ENCODE measurements at regions of chr14 and their contacts with region 1.

Region 1: DNA sequence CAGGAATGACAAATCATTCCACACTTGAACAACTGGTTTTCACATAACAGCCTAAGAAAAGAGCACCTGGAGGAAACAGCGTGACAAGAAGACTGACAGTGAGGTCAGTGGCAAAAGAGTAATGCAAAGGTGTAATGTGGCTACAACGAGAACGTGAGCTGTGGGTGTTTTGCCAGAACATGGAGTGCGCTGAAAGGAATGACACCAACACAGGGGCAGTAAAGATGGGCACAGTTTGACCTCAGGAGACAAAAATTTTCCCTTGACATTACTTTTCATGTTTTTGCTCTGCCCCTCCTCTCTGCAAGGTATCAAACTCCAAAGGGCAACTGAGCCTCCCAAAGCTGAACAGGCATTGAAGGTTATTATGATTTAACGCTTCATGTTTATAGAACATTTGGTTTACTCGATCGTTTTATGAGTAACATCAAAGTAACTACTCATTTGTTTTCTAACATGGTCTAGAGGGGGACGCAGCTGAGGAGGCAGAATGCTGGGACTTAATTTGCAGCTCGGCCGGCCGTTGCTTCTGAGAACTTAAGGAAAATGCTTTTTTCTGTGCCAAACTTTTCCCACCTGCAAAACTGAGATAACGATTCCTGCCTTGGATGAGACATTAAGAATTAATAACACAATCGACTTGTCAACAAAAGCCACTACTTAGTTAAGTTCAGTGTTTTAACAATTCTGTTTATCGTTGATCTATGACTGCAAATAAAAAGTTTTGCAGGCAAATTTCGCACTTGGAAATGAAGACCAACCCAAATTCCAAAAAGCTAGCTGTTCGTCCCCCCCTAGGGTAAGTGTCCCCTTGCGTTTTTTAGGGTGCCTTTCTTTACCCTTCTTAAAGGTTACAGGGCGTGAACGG is 954 bp downstream of the HAUS4 start:
- DNase-seq: peak; percentile 55
- H3K4me3 ChIP-seq: peak overlapping the region; percentile 68 to 76 (median 68)
- H3K27ac ChIP-seq: peak overlapping the region; percentile 79
- H3K4me1 ChIP-seq: peaks cover 11% of the 10 kb centered on the region
- H3K27me3 ChIP-seq: no peaks in the 10 kb centered on the region
- CTCF ChIP-seq: no peak

Region 2: GRCh38 chr14:22748631-22749068 is 207.3 kb before region 1 on chr14:
- CTCF ChIA-PET with region 1: no interaction called
- dilution Hi-C with region 1: no loop called
- in situ Hi-C with region 1: no loop called
- intact Hi-C with region 1: no loop called
- DNase-seq: no peak
- H3K4me3 ChIP-seq: no peak overlapping the region
- H3K27ac ChIP-seq: no peak overlapping the region
- H3K4me1 ChIP-seq: no peaks in the 10 kb centered on the region
- H3K27me3 ChIP-seq: peaks cover 4% of the 10 kb centered on the region
- CTCF ChIP-seq: no peak

Region 3: GRCh38 chr14:22918804-22919600 is 36.9 kb before region 1 on chr14 and contains the start of gene RBM23:
- CTCF ChIA-PET with region 1: no interaction called
- dilution Hi-C with region 1: loop called (anchors 5 kb)
- in situ Hi-C with region 1: no loop called
- intact Hi-C with region 1: no loop called
- DNase-seq: peak; percentile 100
- H3K4me3 ChIP-seq: peak within 1 kb of the TSS; percentile 70 to 99 (median 90)
- H3K27ac ChIP-seq: peak within 1 kb of the TSS; percentile 99
- H3K4me1 ChIP-seq: peaks cover 18% of the 10 kb centered on the region
- H3K27me3 ChIP-seq: no peaks in the 10 kb centered on the region
- CTCF ChIP-seq: no peak
- total RNA-seq, gene RBM23: 38.7 to 55.8 TPM

Region 4: GRCh38 chr14:22939684-22940083 is 16.3 kb before region 1 on chr14:
- CTCF ChIA-PET with region 1: no interaction called
- dilution Hi-C with region 1: no loop called
- in situ Hi-C with region 1: no loop called
- intact Hi-C with region 1: loop called (anchors 2 kb)
- DNase-seq: no peak
- H3K4me3 ChIP-seq: no peak overlapping the region
- H3K27ac ChIP-seq: no peak overlapping the region
- H3K4me1 ChIP-seq: no peaks in the 10 kb centered on the region
- H3K27me3 ChIP-seq: no peaks in the 10 kb centered on the region
- CTCF ChIP-seq: no peak

Region 5: GRCh38 chr14:22973217-22974032 is 17.5 kb after region 1 on chr14:
- CTCF ChIA-PET with region 1: no interaction called
- dilution Hi-C with region 1: no loop called
- in situ Hi-C with region 1: no loop called
- intact Hi-C with region 1: loop called (anchors 1 kb)
- DNase-seq: peak; percentile 57
- H3K4me3 ChIP-seq: no peak overlapping the region
- H3K27ac ChIP-seq: no peak overlapping the region
- H3K4me1 ChIP-seq: peaks cover 40% of the 10 kb centered on the region
- H3K27me3 ChIP-seq: no peaks in the 10 kb centered on the region
- CTCF ChIP-seq: peak; percentile 51 to 64

Region 6: GRCh38 chr14:23186913-23187654 is 231.1 kb after region 1 on chr14:
- CTCF ChIA-PET with region 1: no interaction called
- dilution Hi-C with region 1: no loop called
- in situ Hi-C with region 1: no loop called
- intact Hi-C with region 1: no loop called
- DNase-seq: peak; percentile 44
- H3K4me3 ChIP-seq: no peak overlapping the region
- H3K27ac ChIP-seq: no peak overlapping the region
- H3K4me1 ChIP-seq: peaks cover 8% of the 10 kb centered on the region
- H3K27me3 ChIP-seq: no peaks in the 10 kb centered on the region
- CTCF ChIP-seq: peak; percentile 85 to 86

Measured in mammary epithelial cell (primary cell).